ACHN (cell line): ENCODE measurements at regions of chr6 and their contacts with region 1.

Region 1: DNA sequence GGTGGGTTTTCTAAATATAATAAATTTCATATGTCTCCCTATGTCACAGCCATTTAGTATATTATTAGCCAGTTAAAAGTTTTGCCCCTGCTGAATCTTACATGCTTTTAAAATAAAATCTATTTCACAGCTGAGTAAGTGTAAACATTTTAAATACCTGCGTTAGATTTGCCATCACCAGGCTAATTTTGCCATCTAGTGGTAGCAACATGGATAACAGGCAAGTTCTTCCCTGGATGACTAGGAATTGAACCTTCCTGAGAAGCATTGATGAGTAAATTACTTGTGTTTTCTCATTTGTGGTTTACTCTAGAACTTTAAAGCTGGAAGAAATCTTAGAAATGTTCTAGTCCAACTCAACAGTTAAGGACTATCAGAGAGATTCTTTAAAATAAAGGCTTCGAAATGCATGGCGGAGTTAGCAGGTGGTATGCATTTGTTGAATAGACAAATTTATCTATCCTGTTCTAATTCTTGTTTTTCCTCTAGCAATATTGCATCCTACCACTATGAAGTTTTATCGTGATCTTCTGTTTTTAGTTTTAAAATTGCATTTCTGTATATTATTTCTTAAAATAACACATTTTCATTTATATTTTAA is 2.6 kb downstream of the PRSS35 start:
- DNase-seq: peak; percentile 51

Region 2: DNA sequence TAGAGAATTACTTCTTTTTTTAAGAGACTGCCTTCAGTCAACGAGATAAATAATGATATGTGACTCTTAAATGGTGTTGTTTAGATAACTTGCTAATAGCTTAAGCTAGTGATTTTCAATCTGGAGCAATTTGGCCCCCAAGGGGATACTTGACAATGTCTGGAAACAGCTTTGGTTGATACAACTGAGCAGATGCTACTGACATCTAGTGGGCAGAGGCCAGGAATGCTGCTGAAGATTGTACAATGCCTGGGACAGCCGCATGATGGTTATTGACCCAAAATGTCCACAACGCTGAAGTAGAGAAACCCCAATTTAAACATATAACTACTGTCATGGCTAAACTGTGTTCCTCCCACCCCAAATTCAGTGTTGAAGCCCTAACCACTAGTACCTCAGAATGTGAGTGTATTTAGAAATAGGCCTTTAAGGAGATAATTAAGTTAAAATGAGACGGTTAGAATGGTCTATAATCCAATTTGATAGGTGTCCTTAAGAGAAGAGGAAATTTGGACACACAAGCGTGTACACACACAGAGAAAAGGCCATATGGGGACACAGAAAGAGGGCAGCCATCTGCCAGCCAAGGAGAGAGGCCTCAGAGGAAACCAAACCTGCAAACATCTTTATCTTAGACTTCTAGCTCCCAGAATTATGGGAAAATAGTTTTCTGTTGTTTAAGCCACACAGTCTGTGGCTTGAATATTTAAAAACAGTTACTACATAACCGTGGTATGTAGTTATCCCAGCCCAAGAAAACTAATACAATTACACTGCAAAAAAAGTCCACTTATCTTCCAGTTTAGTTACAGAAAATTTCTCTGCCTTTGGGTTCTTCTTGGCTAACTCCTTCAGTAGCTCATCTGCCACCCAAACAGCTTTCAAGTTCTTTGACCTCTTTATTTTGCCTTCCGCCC is 299.6 kb before region 1 on chr6:
- in situ Hi-C with region 1: loop called (anchors 25 kb)
- DNase-seq: peak; percentile 66